GM10248 (cell line): ENCODE measurements at regions of chr5 and their contacts with region 1.

Region 1: GRCh38 chr5:150361301-150361700 is 3.8 kb downstream of the TCOF1 start:
- DNase-seq: no peak
- CTCF ChIP-seq: no peak

Region 2: GRCh38 chr5:150377964-150378694 is 16.8 kb after region 1 on chr5:
- CTCF ChIA-PET with region 1: interaction called, 22 read pairs
- POLR2A ChIA-PET with region 1: no interaction called
- DNase-seq: no peak
- CTCF ChIP-seq: no peak

Region 3: DNA sequence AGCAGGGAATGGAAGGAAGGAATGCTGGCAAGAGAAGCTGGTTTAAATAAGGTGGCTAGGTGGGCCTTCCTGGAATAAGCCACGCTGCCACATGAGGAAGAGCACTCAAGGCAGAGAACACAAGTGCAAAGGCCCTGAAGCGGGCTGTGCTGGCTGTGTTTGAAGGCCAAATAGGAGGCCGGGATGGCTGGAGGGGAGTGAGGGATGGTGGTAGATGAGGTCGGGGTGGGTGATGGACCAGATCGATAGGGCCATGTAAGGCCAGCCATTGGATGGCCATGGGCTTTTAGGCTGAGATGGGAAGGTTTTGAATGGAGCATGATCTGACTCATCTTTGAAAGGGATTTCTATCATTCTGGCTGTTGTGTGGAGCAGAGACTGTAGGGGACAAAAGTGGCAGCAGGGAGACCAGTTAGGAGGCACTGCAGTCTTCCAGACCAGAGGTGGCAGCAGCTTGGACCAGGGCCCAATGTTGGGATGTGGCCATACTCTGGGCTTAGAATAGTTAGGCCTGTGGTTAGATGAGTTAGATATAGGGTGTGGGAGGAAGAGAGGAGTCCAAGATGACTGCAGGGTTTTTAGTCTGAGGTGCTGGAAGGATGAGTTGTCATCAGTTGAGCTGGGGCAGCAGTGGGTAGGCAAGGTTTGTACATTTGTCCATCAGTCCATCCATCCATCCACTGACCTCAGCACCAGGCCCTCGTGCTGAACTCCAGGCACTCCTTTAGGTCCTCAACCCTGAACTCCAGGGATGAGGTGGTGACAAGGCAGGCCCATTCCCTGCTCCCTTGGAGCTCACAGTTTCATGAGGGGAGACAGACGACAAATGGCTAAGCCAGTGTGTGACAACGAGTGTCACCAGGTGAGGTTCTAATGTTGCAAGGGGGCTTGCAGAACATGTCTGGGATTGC is 177.0 kb after region 1 on chr5:
- CTCF ChIA-PET with region 1: no interaction called
- POLR2A ChIA-PET with region 1: no interaction called
- DNase-seq: no peak
- CTCF ChIP-seq: no peak